ENCODE measurements at regions of chr12 and their contacts with region 1.

Region 1: GRCh38 chr12:48814262-48815125 is 3.8 kb upstream of the CACNB3 start:
- DNase-seq: peak; percentile 96
- H3K4me3 ChIP-seq: peak overlapping the region; percentile 68 to 75
- H3K27ac ChIP-seq: peak overlapping the region; percentile 80 to 87
- H3K4me1 ChIP-seq: peaks cover 22 to 37% of the 10 kb centered on the region in 2 experiments; a peak in 3 of 4 replicates
- H3K27me3 ChIP-seq: no peaks in the 10 kb centered on the region
- CTCF ChIP-seq: peak; percentile 92
- EP300 ChIP-seq: no peak
- RAD21 ChIP-seq: peak; percentile 18; the same call in 1 of the 2 replicates

Region 2: DNA sequence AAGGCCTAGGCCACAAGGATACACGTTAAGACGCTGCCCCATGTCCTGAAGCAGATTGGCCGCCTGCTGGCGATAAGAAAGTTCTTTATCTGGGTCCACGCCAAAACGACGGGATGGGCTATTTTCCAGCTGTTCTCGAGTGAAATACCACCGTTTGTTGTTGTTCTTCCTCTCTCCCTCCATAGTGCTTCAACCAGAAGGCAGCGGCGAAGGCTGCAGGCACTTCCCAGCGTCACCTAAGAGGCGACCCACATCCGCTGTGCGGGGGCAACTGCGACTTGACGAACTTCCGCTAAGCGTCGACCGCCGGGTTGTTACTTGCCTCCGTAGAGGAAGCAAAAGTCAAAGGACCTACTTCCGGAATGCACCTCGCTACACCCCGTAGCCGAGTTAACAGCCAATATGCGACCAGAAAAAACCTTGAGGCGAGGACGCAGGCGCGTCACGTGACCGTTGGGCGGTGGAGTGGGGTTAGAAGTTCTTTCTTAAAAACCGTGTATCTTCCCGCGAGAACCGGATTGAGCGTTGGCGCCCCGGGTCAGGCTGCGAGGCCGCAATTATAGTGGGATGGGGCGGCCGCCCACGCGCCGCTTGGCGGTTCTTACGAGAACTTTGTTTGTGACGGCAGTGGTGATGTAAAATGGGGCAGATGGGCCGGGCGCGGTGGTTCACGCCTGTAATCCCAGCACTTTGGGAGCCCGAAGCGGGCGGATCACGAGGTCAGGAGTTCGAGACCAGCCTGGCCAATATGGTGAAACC is 97.8 kb before region 1 on chr12 and contains the start of gene CCNT1:
- CTCF ChIA-PET with region 1: interaction called, 12 read pairs
- POLR2A ChIA-PET with region 1: no interaction called
- DNase-seq: peak; percentile 96
- H3K4me3 ChIP-seq: peak within 1 kb of the TSS; percentile 76 to 80
- H3K27ac ChIP-seq: peak within 1 kb of the TSS; percentile 93
- H3K4me1 ChIP-seq: peaks cover 5 to 6% of the 10 kb centered on the region in 2 experiments; a peak in 2 of 4 replicates
- H3K27me3 ChIP-seq: no peaks in the 10 kb centered on the region
- CTCF ChIP-seq: peak; percentile 35; the same call in 1 of the 2 replicates
- EP300 ChIP-seq: no peak; a peak in 1 of 4 replicates
- RAD21 ChIP-seq: no peak
- polyA plus RNA-seq, gene CCNT1: 7.2 and 10.9 TPM in 2 replicates

Region 3: DNA sequence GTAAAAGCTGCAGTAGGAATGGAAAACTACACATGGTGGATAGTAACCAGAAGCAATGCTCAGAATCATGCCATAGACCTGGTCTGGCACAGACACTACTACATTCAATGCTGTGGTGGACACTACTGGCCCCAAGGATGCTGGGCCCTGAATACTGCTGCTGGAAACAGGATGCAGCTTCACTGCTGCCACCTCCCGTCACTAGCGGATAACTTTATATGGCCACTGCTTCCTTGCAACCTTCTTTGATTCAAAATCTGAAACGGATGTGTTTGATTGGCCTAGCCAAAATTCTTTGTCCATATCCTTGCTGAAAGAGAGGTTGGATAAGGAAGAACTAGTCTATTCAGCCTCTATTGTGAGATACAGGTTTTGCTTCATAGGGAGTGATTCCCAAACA is 56.3 kb before region 1 on chr12:
- CTCF ChIA-PET with region 1: interaction called, 20 read pairs
- POLR2A ChIA-PET with region 1: no interaction called
- DNase-seq: no peak
- H3K4me3 ChIP-seq: no peak overlapping the region
- H3K27ac ChIP-seq: no peak overlapping the region
- H3K4me1 ChIP-seq: no peaks in the 10 kb centered on the region
- H3K27me3 ChIP-seq: no peaks in the 10 kb centered on the region
- CTCF ChIP-seq: no peak
- EP300 ChIP-seq: no peak
- RAD21 ChIP-seq: no peak

Region 4: DNA sequence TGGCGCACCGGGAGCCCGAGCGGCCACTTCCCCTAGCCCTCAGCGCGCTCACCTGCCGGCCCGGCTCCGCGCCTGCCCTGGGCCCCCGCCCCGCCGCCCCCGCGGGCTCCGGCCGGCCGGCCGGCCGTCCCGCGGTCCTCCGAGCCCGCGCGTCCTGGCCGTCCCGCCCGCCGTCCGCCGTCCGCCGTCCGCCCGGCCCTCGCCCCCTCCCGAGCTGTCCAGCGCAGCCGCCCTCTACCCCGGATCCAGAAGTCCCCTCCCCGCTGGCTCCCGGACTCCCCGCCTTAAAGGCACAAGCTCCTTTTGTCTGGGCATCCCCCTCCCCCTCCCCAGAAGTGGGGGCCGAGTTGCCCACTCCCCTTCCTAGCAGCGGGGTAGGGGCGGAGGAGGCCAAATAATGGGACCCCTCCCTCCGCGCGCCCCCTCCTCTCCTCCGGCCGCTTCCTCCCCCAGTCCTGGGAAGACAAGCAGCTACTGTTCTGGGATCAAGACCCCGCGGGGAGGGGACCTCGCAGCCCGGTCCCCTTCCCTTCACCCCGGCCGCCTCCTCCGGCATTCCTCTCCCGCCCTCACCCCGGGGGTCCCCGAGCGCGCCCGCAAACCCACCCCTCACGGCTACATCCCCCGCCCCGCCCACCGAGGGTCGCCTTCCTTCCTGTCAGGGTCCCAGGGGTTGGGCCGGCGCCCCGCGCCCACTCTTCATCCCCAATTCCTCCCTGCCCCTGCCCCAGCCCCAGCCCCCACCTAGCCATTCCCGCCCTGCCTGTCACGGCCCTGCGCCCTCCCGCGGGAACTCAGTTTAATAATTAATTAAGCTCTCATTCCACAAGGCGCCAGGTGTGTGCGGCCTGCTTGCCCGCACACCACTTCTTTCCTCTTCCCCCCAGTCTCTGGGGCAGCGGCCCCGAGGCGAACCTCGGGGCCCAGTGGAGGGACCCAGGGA is 25.4 kb before region 1 on chr12 and contains the start of gene ADCY6:
- CTCF ChIA-PET with region 1: interaction called, 118 read pairs
- POLR2A ChIA-PET with region 1: no interaction called
- DNase-seq: peak; percentile 96
- H3K4me3 ChIP-seq: peak within 1 kb of the TSS; percentile 69 to 82
- H3K27ac ChIP-seq: peak within 1 kb of the TSS; percentile 33 to 72; a peak in 3 of 4 replicates
- H3K4me1 ChIP-seq: peaks cover 0 to 19% of the 10 kb centered on the region in 2 experiments; a peak in 1 of 4 replicates
- H3K27me3 ChIP-seq: no peaks in the 10 kb centered on the region
- CTCF ChIP-seq: no peak
- EP300 ChIP-seq: no peak
- RAD21 ChIP-seq: no peak
- polyA plus RNA-seq, gene ADCY6: 36.0 and 46.4 TPM in 2 replicates

Region 5: DNA sequence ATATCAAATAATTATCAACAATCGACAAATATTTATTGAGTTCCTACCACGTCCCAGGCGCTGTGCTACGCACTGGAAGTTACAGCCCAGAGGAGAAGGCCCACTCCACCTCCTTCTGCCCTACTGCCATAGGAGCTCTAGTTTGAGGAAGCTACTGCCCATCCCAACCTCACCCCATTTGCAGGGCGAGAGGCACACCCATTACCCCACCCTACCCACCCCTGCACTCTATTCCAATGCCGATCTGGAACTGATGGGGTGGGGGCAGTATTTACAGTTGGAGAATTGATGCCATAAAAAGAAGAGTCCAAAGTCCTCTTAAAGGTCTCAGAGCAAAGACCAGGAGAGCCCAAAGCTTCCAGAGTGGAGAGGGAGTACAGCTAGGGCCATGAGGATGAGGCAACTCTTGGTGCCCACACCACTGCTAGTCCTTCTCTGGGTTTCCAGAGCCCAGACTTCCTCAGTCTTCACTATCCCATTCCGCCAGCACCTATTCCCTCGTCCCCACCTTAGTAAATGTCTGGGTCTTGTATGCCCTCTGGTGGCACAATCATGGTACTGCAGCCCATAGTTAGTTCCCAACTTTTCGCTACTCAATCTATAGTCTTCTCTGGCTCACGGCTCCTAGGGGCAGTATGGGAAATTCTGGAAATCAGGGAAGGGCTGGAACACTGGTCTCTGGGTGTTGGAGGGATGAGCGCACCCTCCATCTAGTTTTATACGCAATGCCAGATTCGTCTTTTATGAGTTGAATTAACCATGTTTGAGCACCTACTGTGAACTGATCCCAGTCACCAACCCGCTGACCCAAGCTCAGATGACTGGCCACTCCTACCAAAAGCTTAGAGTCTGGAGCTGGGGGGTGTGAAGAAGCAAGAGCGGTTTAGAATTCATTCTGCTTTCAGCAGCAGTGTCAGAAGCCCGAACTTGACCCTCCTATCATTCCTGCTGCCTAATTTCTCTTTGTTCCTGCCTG is 18.7 kb before region 1 on chr12:
- CTCF ChIA-PET with region 1: interaction called, 118 read pairs
- POLR2A ChIA-PET with region 1: interaction called, 6 read pairs
- DNase-seq: peak; percentile 88
- H3K4me3 ChIP-seq: no peak overlapping the region; a peak in 1 of 4 replicates
- H3K27ac ChIP-seq: no peak overlapping the region
- H3K4me1 ChIP-seq: no peaks in the 10 kb centered on the region; a peak in 1 of 4 replicates
- H3K27me3 ChIP-seq: no peaks in the 10 kb centered on the region
- CTCF ChIP-seq: peak; percentile 94
- EP300 ChIP-seq: no peak
- RAD21 ChIP-seq: peak; percentile 98

Region 6: DNA sequence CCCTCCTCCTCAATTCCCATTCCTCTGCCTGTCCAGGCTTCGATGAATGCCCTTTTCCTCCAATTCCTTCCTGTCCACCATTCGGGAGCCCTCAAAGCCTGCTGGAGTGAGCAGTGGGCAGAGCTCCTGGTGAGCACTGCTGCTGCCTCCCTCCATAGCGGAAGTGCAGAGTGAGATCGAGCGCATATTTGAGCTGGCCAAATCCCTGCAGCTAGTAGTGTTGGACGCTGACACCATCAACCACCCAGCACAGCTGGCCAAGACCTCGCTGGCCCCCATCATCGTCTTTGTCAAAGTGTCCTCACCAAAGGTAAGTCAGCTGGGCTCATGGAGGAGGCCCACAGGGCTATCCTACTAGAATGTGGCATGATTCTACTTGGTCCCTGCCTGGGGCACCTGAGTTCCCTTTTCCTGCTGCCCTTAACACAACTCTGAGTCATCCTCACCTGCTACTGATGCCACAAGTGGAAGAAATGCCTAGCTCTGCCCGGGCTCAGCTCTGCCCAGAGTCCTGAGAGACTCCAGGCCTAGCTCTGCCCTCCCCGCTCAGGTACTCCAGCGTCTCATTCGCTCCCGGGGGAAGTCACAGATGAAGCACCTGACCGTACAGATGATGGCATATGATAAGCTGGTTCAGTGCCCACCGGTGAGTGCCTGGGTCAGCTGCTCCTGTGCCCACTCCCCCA is 11.9 kb after region 1 on chr12:
- CTCF ChIA-PET with region 1: interaction called, 16 read pairs
- POLR2A ChIA-PET with region 1: interaction called, 5 read pairs
- DNase-seq: no peak
- H3K4me3 ChIP-seq: no peak overlapping the region
- H3K27ac ChIP-seq: no peak overlapping the region
- H3K4me1 ChIP-seq: no peaks in the 10 kb centered on the region; a peak in 1 of 4 replicates
- H3K27me3 ChIP-seq: no peaks in the 10 kb centered on the region
- CTCF ChIP-seq: no peak
- EP300 ChIP-seq: no peak
- RAD21 ChIP-seq: no peak

Region 7: DNA sequence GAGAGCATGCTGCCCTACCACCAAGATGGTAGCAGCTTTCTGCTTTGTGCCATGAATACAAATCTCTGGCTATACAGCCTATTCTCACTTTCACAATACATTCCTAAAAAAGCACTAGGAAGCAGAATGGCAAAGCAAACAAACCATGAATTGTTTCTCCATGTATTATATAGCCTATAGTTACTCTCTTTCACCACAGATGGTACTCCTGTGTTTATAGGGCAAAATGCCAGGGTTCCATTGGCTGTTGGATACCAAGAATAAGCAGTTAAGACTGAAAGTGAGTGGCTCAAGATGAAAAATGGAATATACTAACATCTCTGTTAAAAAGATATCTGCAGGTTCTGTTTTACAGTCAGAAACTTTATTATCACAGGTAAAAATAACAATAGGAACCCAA is 131.7 kb after region 1 on chr12:
- CTCF ChIA-PET with region 1: interaction called, 10 read pairs
- POLR2A ChIA-PET with region 1: no interaction called
- DNase-seq: no peak
- H3K4me3 ChIP-seq: no peak overlapping the region
- H3K27ac ChIP-seq: no peak overlapping the region
- H3K4me1 ChIP-seq: no peaks in the 10 kb centered on the region
- H3K27me3 ChIP-seq: no peaks in the 10 kb centered on the region
- CTCF ChIP-seq: no peak
- EP300 ChIP-seq: no peak
- RAD21 ChIP-seq: no peak